Endothelial cell of umbilical vein (primary cell): ENCODE measurements at regions of chr6 and their contacts with region 1.

Region 1: DNA sequence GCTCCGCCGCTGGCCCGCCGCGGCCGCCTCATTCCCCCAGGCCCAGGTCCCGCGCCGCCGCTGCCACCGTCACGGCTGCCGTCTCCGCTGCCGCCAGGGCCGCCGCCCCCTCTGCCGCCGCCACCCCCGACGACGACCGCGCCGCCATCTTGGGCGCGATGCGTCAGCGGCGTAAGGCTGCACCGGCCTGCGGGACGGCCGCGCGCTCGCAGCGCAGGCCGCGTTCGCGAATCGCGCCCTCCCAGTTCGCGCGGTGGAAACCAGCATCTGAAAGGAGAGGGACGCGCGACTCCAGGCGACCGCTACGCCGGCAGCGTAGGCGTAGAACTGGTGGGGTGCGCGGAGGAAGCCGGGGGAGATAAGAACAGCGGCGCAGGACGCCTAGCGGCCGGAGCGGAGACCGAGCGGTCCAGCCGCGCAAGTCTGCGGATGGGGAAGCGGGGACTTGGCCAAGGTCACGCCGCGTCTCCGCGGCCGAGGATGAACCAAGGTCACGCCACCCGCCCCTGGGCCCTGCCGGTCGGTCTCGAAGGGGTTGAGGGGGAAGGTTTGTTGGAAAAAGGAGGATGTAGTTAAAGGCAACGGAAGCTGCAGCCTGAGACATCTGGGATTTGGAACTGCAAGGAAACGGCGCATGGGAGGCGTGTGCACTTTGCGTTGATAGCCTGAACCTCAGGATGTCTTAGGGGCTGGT is at the start of gene NUDT3:
- DNase-seq: peak; percentile 96
- H3K4me3 ChIP-seq: peak within 1 kb of the TSS; percentile 84 to 98 (median 96)
- H3K27ac ChIP-seq: peak within 1 kb of the TSS; percentile 27
- H3K4me1 ChIP-seq: peaks cover 11% of the 10 kb centered on the region
- H3K27me3 ChIP-seq: no peaks in the 10 kb centered on the region
- CTCF ChIP-seq: peak; percentile 89 to 95
- POLR2A ChIP-seq: peak; percentile 31
- total RNA-seq, gene NUDT3: 30.9 and 31.7 TPM in 2 replicates

Region 2: GRCh38 chr6:34273242-34273805 is 119.3 kb before region 1 on chr6:
- CTCF ChIA-PET with region 1: interaction called, 4 read pairs
- POLR2A ChIA-PET with region 1: no interaction called
- dilution Hi-C with region 1: no loop called
- intact Hi-C with region 1: loop called (anchors 1 kb)
- DNase-seq: peak; percentile 95
- H3K4me3 ChIP-seq: no peak overlapping the region
- H3K27ac ChIP-seq: peak overlapping the region; percentile 6
- H3K4me1 ChIP-seq: peaks cover 18% of the 10 kb centered on the region
- H3K27me3 ChIP-seq: no peaks in the 10 kb centered on the region
- CTCF ChIP-seq: no peak
- POLR2A ChIP-seq: peak; percentile 75

Region 3: DNA sequence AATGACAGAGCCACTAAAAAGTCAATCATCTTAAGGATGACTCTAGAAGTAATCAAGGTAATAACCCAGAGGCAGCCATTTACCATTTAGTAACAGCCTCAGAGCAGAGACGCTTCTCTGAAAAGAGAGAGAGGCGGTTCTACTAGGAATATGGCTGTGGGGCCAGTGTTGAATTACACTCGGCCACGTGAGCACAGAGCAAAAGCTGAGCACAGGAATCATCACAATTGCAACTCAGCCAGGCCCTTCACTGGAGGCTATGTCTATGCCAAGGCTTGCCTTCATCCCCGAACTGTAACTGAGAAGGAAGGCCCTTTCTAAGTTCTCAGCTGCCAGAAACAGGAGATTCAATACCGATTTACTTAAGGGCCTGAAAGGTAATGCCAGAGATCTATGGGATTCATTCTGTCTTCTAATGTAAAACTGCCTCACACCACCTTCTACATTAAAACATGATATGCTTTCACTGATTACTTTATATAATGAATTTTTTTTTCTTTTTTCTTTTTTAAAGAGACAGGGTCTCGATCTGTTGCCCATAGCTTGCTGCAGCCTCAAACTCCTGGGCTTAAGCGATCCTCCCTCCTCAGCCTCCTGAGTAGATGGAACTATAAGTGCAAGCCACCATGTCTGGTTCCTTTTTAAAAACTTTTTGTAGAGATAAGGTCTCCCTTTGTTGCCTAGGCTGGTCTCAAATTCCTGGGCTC is 67.8 kb before region 1 on chr6:
- CTCF ChIA-PET with region 1: no interaction called
- POLR2A ChIA-PET with region 1: no interaction called
- dilution Hi-C with region 1: no loop called
- intact Hi-C with region 1: loop called (anchors 5 kb)
- DNase-seq: no peak
- H3K4me3 ChIP-seq: no peak overlapping the region
- H3K27ac ChIP-seq: no peak overlapping the region
- H3K4me1 ChIP-seq: peaks cover 11% of the 10 kb centered on the region
- H3K27me3 ChIP-seq: no peaks in the 10 kb centered on the region
- CTCF ChIP-seq: no peak
- POLR2A ChIP-seq: no peak

Region 4: GRCh38 chr6:34341481-34341971 is 51.1 kb before region 1 on chr6:
- CTCF ChIA-PET with region 1: interaction called, 4 read pairs
- POLR2A ChIA-PET with region 1: no interaction called
- dilution Hi-C with region 1: no loop called
- intact Hi-C with region 1: loop called (anchors 1 kb)
- DNase-seq: peak; percentile 84
- H3K4me3 ChIP-seq: no peak overlapping the region
- H3K27ac ChIP-seq: peak overlapping the region; percentile 46
- H3K4me1 ChIP-seq: peaks cover 56% of the 10 kb centered on the region
- H3K27me3 ChIP-seq: no peaks in the 10 kb centered on the region
- CTCF ChIP-seq: no peak
- POLR2A ChIP-seq: no peak

Region 5: DNA sequence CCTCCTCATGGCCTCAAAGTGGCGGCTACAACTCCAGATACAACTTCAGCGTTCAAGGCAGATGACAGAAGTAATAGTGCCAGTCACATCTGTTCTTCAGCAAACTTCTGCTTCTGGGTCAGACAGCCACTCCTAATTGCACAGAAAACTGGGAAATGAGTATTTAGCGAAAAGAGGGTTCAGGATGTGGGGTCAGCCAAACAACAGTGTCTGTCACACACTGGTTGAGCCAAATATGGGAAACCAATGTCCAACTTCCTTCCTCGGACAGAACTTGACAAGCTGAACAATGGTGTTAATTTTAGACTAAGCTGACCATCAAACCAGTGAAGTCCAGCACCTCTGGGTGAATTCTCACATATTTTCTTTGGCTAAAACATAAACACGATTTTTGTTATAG is 22.3 kb before region 1 on chr6:
- CTCF ChIA-PET with region 1: no interaction called
- POLR2A ChIA-PET with region 1: no interaction called
- dilution Hi-C with region 1: no loop called
- intact Hi-C with region 1: loop called (anchors 1 kb)
- DNase-seq: peak; percentile 85
- H3K4me3 ChIP-seq: no peak overlapping the region
- H3K27ac ChIP-seq: peak overlapping the region; percentile 39
- H3K4me1 ChIP-seq: peaks cover 23% of the 10 kb centered on the region
- H3K27me3 ChIP-seq: no peaks in the 10 kb centered on the region
- CTCF ChIP-seq: no peak
- POLR2A ChIP-seq: no peak